ENCODE measurements at regions of chr4 and their contacts with region 1.

Region 1: DNA sequence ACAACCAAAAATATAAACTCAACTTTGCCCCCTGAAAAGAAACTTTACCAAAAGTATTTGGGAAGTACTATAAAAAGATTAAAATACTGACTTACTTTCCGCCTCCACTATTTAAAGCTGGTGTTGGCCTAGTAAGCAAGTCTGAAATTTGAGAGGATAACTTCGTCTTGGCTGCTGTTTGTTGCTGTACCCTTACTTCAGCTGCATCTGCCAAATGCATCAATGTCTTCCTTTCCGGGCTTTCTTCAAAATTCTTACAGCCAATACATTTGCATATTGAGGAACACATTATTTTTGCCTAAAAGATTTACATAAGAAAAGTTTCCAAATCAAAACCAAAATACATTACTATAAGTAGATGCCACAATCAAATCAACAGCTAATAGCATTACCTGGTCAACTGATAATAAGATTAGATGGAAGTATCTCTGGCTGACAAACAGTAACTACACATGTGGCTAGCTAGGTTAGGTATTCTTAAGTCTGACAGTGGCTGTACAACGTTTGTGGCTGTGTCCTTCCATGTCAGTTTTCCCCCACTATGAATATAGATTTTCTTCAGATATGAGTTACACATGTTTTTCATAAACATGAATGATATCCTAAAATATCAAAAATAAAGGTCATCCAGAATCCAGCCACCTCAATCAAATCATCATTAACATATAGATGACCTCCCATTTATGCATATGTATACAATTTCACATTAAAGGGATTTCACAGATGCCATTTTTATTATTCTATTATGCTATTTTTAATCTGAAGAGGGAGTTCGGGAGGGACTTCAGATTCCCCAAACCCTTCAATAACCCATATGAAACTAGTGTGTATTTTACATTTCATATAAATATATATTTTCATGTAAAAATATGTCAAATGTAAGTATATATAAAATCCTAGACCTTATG is 30.6 kb downstream of the THAP9 start:
- DNase-seq: no peak
- ATAC-seq: no peak
- H3K4me3 ChIP-seq: no peak overlapping the region
- H3K27ac ChIP-seq: no peak overlapping the region
- H3K4me1 ChIP-seq: no peaks in the 10 kb centered on the region
- H3K27me3 ChIP-seq: no peaks in the 10 kb centered on the region
- CTCF ChIP-seq: no peak
- POLR2A ChIP-seq: no peak
- RAD21 ChIP-seq: no peak

Region 2: GRCh38 chr4:82948647-82949204 is 17.6 kb after region 1 on chr4:
- CTCF ChIA-PET with region 1: interaction called, 3 read pairs
- POLR2A ChIA-PET with region 1: no interaction called
- dilution Hi-C with region 1: no loop called
- in situ Hi-C with region 1: no loop called
- intact Hi-C with region 1: loop called (anchors 2 kb)
- DNase-seq: peak; percentile 52
- ATAC-seq: peak; percentile 57
- H3K4me3 ChIP-seq: no peak overlapping the region
- H3K27ac ChIP-seq: no peak overlapping the region
- H3K4me1 ChIP-seq: no peaks in the 10 kb centered on the region
- H3K27me3 ChIP-seq: no peaks in the 10 kb centered on the region
- CTCF ChIP-seq: no peak
- POLR2A ChIP-seq: no peak
- RAD21 ChIP-seq: no peak

Region 3: GRCh38 chr4:82975792-82976191 is 44.7 kb after region 1 on chr4:
- CTCF ChIA-PET with region 1: no interaction called
- POLR2A ChIA-PET with region 1: no interaction called
- dilution Hi-C with region 1: no loop called
- in situ Hi-C with region 1: no loop called
- intact Hi-C with region 1: loop called (anchors 2 kb)
- DNase-seq: peak; percentile 78
- ATAC-seq: peak; percentile 42; the same call in 1 of the 2 replicates
- H3K4me3 ChIP-seq: no peak overlapping the region
- H3K27ac ChIP-seq: no peak overlapping the region
- H3K4me1 ChIP-seq: peaks cover 1% of the 10 kb centered on the region; the same call in 1 of the 2 replicates
- H3K27me3 ChIP-seq: no peaks in the 10 kb centered on the region
- CTCF ChIP-seq: no peak
- POLR2A ChIP-seq: no peak
- RAD21 ChIP-seq: no peak

Measured in IMR-90 (cell line).